ENCODE measurements at regions of chr1 and their contacts with region 1.

Region 1: GRCh38 chr1:29094954-29095353 is 28.7 kb downstream of the TMEM200B start:
- DNase-seq: no peak
- H3K4me3 ChIP-seq: no peak overlapping the region
- H3K4me3 Mint-ChIP-seq: no peak overlapping the region
- H3K27ac Mint-ChIP-seq: no peak overlapping the region
- H3K4me1 ChIP-seq: no peaks in the 10 kb centered on the region
- H3K4me1 Mint-ChIP-seq: no peaks in the 10 kb centered on the region
- H3K27me3 ChIP-seq: no peaks in the 10 kb centered on the region
- H3K27me3 Mint-ChIP-seq: no peaks in the 10 kb centered on the region
- CTCF ChIP-seq: no peak

Region 2: DNA sequence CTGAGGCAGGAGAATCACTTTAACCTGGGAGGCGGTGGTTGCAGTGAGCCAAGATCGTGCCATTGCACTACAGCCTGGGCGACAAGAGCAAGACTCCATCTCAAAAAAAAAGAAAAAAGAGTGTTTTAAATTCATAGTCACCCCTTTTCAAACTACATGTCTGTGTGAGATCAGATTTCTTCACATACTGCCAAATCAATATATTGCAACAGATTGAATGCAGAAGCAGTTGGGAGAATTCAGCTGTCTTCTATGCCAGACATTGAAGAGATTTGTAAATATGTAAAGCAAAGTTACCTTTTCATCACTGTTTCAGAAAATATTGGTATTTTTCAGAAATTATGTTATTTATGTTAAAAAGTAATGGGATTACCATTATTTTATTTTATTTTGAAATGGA is 72.3 kb before region 1 on chr1:
- CTCF ChIA-PET with region 1: no interaction called
- POLR2A ChIA-PET with region 1: no interaction called
- intact Hi-C with region 1: no loop called
- DNase-seq: no peak
- H3K4me3 ChIP-seq: no peak overlapping the region
- H3K4me3 Mint-ChIP-seq: no peak overlapping the region
- H3K27ac Mint-ChIP-seq: no peak overlapping the region
- H3K4me1 ChIP-seq: no peaks in the 10 kb centered on the region
- H3K4me1 Mint-ChIP-seq: no peaks in the 10 kb centered on the region
- H3K27me3 ChIP-seq: no peaks in the 10 kb centered on the region
- H3K27me3 Mint-ChIP-seq: no peaks in the 10 kb centered on the region
- CTCF ChIP-seq: no peak

Region 3: DNA sequence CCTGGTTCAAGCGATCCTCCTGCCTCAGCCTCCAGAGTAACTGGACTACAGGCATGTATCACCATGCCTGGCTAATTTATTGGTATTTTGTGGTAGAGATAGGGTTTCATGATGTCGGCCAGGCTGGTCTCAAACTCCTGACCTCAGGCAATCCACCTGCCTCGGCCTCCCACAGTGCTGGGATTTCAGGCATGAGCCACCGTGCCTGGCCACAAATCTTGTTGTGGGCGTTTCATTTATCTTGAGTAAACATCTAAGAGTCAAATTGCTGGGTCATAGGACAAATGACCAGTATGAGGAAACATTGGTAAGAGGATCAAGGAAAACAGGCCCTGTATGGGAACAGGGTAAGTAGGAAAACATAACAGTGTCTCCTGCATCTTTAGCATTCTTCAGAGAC is 10.9 kb after region 1 on chr1:
- CTCF ChIA-PET with region 1: no interaction called
- POLR2A ChIA-PET with region 1: no interaction called
- intact Hi-C with region 1: no loop called
- DNase-seq: peak; percentile 36 to 53
- H3K4me3 ChIP-seq: no peak overlapping the region
- H3K4me3 Mint-ChIP-seq: no peak overlapping the region
- H3K27ac Mint-ChIP-seq: no peak overlapping the region
- H3K4me1 ChIP-seq: no peaks in the 10 kb centered on the region
- H3K4me1 Mint-ChIP-seq: no peaks in the 10 kb centered on the region
- H3K27me3 ChIP-seq: no peaks in the 10 kb centered on the region
- H3K27me3 Mint-ChIP-seq: no peaks in the 10 kb centered on the region
- CTCF ChIP-seq: no peak

Region 4: GRCh38 chr1:29136391-29136915 is 41.5 kb after region 1 on chr1:
- CTCF ChIA-PET with region 1: no interaction called
- POLR2A ChIA-PET with region 1: interaction called, 11 read pairs
- intact Hi-C with region 1: no loop called
- DNase-seq: no peak
- H3K4me3 ChIP-seq: no peak overlapping the region
- H3K4me3 Mint-ChIP-seq: no peak overlapping the region
- H3K27ac Mint-ChIP-seq: no peak overlapping the region
- H3K4me1 ChIP-seq: no peaks in the 10 kb centered on the region
- H3K4me1 Mint-ChIP-seq: no peaks in the 10 kb centered on the region
- H3K27me3 ChIP-seq: no peaks in the 10 kb centered on the region
- H3K27me3 Mint-ChIP-seq: no peaks in the 10 kb centered on the region
- CTCF ChIP-seq: no peak

Region 5: GRCh38 chr1:29156543-29157268 is 61.8 kb after region 1 on chr1:
- CTCF ChIA-PET with region 1: no interaction called
- POLR2A ChIA-PET with region 1: no interaction called
- intact Hi-C with region 1: no loop called
- DNase-seq: peak; percentile 71 to 76
- H3K4me3 ChIP-seq: no peak overlapping the region
- H3K4me3 Mint-ChIP-seq: peak overlapping the region; percentile 52
- H3K27ac Mint-ChIP-seq: peak overlapping the region; percentile 82
- H3K4me1 ChIP-seq: peaks cover 16% of the 10 kb centered on the region
- H3K4me1 Mint-ChIP-seq: no peaks in the 10 kb centered on the region
- H3K27me3 ChIP-seq: no peaks in the 10 kb centered on the region
- H3K27me3 Mint-ChIP-seq: no peaks in the 10 kb centered on the region
- CTCF ChIP-seq: no peak

Region 6: DNA sequence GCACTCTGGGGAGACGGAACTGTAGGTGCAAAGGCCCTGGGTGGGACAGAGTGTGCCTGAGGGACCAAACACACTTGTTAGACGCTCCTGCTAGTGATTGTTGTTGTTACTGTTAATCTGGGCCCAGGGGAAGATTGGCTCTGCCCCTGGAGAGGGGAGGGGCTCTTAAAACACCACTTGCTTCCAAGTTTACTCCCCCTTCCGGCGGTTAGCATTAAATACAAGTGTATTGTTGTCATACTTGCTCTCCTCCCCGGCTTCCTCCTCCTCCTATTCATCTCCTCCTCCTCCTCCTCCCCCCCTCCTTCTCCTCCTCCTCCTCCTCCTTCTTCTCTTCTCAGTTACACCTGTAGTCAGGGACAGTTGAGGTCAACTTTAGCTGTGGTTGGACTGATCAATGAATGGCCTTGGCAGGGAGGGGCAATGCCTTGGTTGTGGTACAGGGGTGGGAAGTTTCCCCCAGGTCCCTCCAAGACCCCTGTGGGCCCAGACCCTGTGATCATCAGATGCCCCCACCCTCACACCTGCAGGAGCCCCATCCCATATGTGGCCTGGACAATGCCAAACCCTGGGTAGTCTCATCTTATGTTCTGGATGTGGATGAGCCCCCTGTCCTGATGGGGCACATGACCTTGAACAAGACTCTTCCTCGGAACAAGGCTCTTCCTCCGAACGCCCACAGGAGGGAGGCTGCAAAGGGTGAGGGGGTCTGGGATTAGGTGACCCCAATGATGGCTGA is 358.7 kb after region 1 on chr1:
- CTCF ChIA-PET with region 1: no interaction called
- POLR2A ChIA-PET with region 1: no interaction called
- intact Hi-C with region 1: no loop called
- DNase-seq: peak in 1 of 2 experiments; percentile 26
- H3K4me3 ChIP-seq: no peak overlapping the region
- H3K4me3 Mint-ChIP-seq: no peak overlapping the region
- H3K27ac Mint-ChIP-seq: no peak overlapping the region
- H3K4me1 ChIP-seq: no peaks in the 10 kb centered on the region
- H3K4me1 Mint-ChIP-seq: no peaks in the 10 kb centered on the region
- H3K27me3 ChIP-seq: no peaks in the 10 kb centered on the region
- H3K27me3 Mint-ChIP-seq: no peaks in the 10 kb centered on the region
- CTCF ChIP-seq: peak; percentile 8 to 14